Mucosa of descending colon (tissue), 3 donors: ENCODE measurements at regions of chr14 and their contacts with region 1.

Region 1: DNA sequence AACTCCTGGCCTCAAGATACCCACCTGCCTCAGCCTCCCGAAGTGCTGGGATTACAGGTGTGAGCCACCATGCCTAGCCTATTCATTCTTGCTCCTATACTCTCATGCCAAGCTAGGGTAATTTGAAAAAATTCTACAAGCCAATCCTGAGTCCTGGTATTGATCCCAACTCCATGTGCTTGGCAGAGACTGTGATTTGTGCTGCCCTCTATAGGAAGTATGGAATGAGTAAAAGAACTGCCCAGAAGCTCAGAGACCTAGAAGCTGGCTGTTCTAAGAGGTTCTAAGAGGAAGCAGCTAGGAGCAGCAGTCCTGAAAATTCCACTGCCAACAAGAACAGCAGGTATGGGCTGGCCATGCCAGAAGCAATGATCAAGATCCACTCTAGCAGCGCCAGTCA is 402.5 kb downstream of the PCNX1 start:
- DNase-seq: no peak
- ATAC-seq: peak; percentile 54
- H3K4me3 ChIP-seq: no peak overlapping the region
- H3K4me1 ChIP-seq: no peaks in the 10 kb centered on the region
- CTCF ChIP-seq: no peak

Region 2: GRCh38 chr14:71155743-71156142 is 154.0 kb before region 1 on chr14:
- intact Hi-C with region 1: loop called in 1 of 2 experiments (anchors 10 kb)
- DNase-seq: no peak
- ATAC-seq: no peak
- H3K4me3 ChIP-seq: no peak overlapping the region
- H3K4me1 ChIP-seq: no peaks in the 10 kb centered on the region
- CTCF ChIP-seq: no peak